ENCODE measurements at regions of chr4 and their contacts with region 1.

Region 1: GRCh38 chr4:18689308-18690115 is 668.0 kb upstream of the LCORL start:
- DNase-seq: peak; percentile 76
- ATAC-seq: no peak
- H3K4me3 ChIP-seq: no peak overlapping the region
- H3K27ac ChIP-seq: no peak overlapping the region
- H3K4me1 ChIP-seq: peaks cover 18% of the 10 kb centered on the region
- H3K27me3 ChIP-seq: no peaks in the 10 kb centered on the region
- CTCF ChIP-seq: peak; percentile 85

Region 2: GRCh38 chr4:18934197-18934596 is 244.7 kb after region 1 on chr4:
- CTCF ChIA-PET with region 1: no interaction called
- POLR2A ChIA-PET with region 1: no interaction called
- intact Hi-C with region 1: loop called (anchors 1 kb)
- DNase-seq: peak; percentile 33
- ATAC-seq: peak; percentile 56
- H3K4me3 ChIP-seq: no peak overlapping the region
- H3K27ac ChIP-seq: no peak overlapping the region
- H3K4me1 ChIP-seq: no peaks in the 10 kb centered on the region
- H3K27me3 ChIP-seq: no peaks in the 10 kb centered on the region; the same call in 1 of the 2 replicates
- CTCF ChIP-seq: peak; percentile 58

Region 3: GRCh38 chr4:19300213-19300612 is 610.7 kb after region 1 on chr4:
- CTCF ChIA-PET with region 1: no interaction called
- POLR2A ChIA-PET with region 1: no interaction called
- intact Hi-C with region 1: loop called (anchors 5 kb)
- DNase-seq: peak; percentile 16
- ATAC-seq: no peak
- H3K4me3 ChIP-seq: no peak overlapping the region
- H3K27ac ChIP-seq: no peak overlapping the region
- H3K4me1 ChIP-seq: peaks cover 16% of the 10 kb centered on the region
- H3K27me3 ChIP-seq: no peaks in the 10 kb centered on the region
- CTCF ChIP-seq: no peak

Measured in PC-3 (cell line).